ENCODE measurements at regions of chr12 and their contacts with region 1.

Region 1: GRCh38 chr12:98516184-98516873 is 939 bp downstream of the TMPO start:
- DNase-seq: peak; percentile 52 to 91 (median 78)

Region 2: GRCh38 chr12:98424726-98425401 is 91.5 kb before region 1 on chr12:
- intact Hi-C with region 1: loop called (anchors 10 kb)
- DNase-seq: peak; percentile 42 to 87 (median 72)

Region 3: GRCh38 chr12:98490501-98491453 is 25.6 kb before region 1 on chr12:
- intact Hi-C with region 1: loop called (anchors 1 kb)
- DNase-seq: peak; percentile 76 to 96 (median 90)

Region 4: DNA sequence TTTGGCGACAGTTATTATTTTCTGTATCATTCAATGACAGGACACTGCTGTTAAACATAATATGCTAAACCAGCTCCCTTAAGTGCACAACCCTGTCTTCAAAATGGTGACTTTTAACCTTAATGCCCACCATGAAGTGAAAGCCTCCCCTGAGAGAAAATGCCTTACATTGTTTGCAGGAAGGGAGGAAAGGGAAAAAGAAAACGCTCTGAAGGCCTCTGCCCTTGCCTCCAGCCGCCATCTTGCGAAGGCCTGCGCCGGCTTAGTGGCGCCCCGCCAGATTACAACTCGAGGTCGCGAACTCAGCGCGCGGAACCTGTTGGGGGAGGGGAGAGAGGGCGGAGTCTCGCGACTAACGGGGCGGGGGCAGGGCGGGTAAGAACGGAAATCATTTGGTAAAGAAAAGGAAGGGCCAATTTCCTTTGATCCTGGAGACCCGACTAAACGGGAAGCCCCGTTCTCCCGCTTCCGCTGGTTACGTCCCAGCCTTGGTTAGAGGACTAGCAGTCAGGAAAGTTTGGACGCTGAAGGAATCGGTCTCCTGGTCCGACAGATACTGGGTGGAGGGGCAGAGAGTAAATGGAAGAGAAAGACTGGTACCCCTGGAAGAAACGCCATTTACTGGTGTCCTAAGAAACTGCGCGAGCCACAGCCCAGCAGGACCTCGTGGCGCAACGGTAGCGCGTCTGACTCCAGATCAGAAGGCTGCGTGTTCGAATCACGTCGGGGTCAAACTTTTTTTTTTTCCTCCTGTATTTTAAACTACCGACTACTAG is 12.5 kb before region 1 on chr12:
- intact Hi-C with region 1: loop called (anchors 1 kb)
- DNase-seq: peak; percentile 83 to 97 (median 91)

Region 5: DNA sequence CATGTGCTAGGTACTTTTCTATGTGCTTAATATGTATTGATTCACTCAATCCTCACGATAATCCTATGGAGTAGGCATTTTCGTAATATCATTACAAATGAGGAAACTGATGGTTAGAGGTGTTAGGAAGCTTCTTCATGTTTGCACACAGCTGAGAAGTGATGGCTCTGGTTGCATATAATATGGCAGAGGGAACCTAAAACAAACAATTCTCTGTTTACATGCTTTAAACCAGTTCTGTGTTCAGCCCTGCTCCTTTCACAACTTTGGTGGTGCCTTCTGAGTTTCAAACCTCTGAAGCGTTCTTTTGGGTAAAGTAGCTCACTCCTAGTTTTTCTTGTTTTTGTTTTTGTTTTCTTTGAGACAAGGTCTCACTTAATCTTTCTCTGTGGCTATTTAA is 34.5 kb after region 1 on chr12:
- intact Hi-C with region 1: no loop called
- DNase-seq: no peak

Region 6: GRCh38 chr12:98644711-98645402 is 128.5 kb after region 1 on chr12 and contains the starts of genes APAF1 and IKBIP:
- intact Hi-C with region 1: loop called (anchors 5 kb)
- DNase-seq: peak; percentile 91 to 99 (median 97)

Region 7: DNA sequence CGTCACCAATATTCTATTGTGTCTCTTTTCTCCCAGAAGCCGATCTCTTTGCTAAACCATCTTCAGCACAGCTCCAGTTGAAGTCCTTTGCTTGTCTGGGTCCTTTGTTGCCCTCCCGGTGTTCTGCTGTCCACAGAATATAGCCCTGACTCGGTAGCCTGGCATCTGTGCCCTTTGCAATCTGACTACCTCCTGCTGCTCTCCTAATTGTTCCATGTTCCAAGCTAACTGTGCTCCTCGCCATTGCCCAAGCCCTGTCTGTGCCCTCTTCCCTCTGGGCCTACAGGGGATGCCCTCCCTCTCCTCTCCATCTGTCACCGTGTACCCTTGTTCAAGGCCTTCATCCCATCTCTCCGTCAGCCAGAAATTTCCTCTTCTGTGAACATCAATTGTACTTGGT is 435.1 kb after region 1 on chr12:
- intact Hi-C with region 1: no loop called
- DNase-seq: no peak